Lower leg skin (tissue), 4 donors: ENCODE measurements at regions of chr19 and their contacts with region 1.

Region 1: GRCh38 chr19:53849237-53849676 is 18.4 kb upstream of the MYADM start:
- DNase-seq: no peak
- H3K4me3 ChIP-seq: no peak overlapping the region
- CTCF ChIP-seq: no peak
- POLR2A ChIP-seq: no peak

Region 2: DNA sequence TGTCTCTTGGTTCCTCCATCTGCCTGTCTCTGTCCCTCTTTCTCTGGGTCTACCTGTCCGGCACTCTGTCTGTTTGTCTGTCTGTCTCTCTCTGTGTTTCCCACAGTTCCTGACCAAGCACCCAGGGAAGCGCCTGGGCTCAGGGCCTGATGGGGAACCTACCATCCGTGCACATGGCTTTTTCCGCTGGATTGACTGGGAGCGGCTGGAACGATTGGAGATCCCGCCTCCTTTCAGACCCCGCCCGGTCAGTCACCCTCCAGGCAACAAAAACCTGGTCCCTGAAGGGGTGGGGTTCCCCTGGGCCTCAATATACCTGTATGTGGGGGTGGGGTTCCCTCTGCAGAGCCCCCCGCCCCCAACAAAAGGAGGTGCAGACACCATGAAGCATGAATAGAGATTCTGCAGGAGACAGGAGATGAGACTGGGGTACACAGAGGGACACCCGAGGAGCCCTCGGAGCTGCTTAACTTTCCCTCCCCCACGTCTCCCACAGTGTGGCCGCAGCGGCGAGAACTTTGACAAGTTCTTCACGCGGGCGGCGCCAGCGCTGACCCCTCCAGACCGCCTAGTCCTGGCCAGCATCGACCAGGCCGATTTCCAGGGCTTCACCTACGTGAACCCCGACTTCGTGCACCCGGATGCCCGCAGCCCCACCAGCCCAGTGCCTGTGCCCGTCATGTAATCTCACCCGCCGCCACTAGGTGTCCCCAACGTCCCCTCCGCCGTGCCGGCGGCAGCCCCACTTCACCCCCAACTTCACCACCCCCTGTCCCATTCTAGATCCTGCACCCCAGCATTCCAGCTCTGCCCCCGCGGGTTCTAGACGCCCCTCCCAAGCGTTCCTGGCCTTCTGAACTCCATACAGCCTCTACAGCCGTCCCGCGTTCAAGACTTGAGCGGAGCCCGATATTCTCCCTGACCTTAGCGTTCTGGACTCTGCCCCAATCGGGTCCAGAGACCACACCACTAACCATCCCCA is 57.2 kb after region 1 on chr19:
- intact Hi-C with region 1: no loop called
- DNase-seq: no peak
- H3K4me3 ChIP-seq: no peak overlapping the region
- CTCF ChIP-seq: no peak
- POLR2A ChIP-seq: no peak

Region 3: GRCh38 chr19:54017261-54017660 is 168.0 kb after region 1 on chr19:
- intact Hi-C with region 1: loop called (anchors 10 kb)
- DNase-seq: no peak
- H3K4me3 ChIP-seq: no peak overlapping the region
- CTCF ChIP-seq: no peak
- POLR2A ChIP-seq: no peak